GM10248 (cell line): ENCODE measurements at regions of chr1 and their contacts with region 1.

Region 1: GRCh38 chr1:151024540-151025146 is 11.7 kb upstream of the BNIPL start:
- DNase-seq: peak; percentile 81
- CTCF ChIP-seq: peak; percentile 69

Region 2: DNA sequence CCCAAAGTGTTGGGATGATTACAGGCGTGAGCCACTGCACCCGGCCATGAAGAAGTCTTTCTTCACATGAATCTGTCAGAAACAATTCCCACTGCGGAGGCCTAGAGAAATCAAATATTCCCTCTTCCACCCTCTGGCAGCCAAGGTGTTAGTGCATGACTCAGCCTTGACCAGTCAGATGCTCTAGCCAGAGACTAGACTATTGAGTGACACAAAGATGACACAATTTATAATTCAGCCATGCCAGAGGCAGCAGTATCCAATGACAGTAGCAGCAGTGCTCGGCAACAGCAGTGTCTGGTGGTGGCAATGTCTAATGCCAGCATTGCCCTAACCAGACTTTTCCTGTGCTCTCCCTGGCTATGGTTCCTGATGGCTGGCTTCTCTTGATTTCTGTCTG is 129.0 kb before region 1 on chr1:
- CTCF ChIA-PET with region 1: no interaction called
- POLR2A ChIA-PET with region 1: no interaction called
- DNase-seq: no peak
- CTCF ChIP-seq: no peak

Region 3: DNA sequence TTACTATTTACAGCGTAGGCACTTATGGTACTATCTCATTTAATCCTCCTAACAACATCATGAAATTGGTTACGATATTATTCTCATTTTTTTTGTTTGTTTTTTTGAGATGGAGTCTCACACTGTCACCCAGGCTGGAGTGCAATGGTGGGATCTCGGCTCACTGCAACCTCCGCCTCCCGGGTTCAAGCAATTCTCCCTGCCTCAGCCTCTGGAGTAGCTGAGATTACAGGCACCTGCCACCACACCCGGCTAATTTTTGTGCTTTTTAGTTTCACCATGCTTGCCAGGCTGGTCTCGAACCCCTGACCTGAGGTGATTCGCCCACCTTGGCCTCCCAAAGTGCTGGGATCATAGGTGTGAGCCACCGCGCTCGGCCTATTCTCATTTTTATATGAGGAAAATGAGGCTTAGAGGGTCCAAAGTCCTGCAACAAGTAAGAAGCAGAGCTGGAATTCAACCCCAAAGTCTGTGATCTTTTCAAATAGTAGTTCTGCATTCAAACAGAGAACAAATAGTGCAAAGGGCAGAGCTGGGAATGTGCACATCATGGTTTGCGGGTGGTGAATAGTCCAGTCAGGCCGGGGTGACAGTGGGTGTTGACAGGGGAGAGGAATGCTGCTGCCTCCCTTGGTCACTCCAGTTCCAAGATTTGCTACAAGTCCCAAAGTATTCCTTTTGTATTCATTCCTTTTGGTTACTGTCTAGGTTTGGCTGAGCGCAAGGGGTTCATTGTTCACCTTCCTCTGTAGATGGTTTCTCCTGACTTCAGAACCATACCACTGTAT is 11.8 kb before region 1 on chr1:
- CTCF ChIA-PET with region 1: interaction called, 12 read pairs
- POLR2A ChIA-PET with region 1: no interaction called
- DNase-seq: no peak
- CTCF ChIP-seq: no peak

Region 4: DNA sequence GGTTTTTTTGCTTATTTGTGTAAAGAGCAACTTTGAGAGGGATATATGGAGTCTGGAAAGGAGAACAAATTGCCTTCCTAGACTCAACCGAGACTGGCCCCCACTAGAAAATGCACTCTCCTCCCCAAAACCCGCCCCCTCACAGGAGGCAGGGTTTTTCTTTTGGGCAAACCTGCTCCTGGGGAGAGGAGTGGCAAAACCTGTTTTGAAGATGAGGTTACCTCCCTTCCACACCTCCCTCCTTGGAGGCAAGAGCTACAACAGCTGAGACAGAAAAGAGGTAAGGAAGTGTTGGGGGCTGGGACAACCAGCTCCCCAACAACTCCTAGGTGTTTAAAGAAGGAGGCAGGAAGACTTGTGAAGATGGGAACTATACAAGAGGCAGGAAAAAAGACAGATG is 11.7 kb after region 1 on chr1 and contains the start of gene BNIPL:
- CTCF ChIA-PET with region 1: interaction called, 11 read pairs
- POLR2A ChIA-PET with region 1: interaction called, 3 read pairs
- DNase-seq: no peak
- CTCF ChIP-seq: no peak

Region 5: DNA sequence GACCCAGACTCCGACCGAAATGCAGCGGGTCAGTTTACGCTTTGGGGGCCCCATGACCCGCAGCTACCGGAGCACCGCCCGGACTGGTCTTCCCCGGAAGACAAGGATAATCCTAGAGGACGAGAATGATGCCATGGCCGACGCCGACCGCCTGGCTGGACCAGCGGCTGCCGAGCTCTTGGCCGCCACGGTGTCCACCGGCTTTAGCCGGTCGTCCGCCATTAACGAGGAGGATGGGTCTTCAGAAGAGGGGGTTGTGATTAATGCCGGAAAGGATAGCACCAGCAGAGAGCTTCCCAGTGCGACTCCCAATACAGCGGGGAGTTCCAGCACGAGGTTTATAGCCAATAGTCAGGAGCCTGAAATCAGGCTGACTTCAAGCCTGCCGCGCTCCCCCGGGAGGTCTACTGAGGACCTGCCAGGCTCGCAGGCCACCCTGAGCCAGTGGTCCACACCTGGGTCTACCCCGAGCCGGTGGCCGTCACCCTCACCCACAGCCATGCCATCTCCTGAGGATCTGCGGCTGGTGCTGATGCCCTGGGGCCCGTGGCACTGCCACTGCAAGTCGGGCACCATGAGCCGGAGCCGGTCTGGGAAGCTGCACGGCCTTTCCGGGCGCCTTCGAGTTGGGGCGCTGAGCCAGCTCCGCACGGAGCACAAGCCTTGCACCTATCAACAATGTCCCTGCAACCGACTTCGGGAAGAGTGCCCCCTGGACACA is 23.4 kb after region 1 on chr1:
- CTCF ChIA-PET with region 1: interaction called, 10 read pairs
- POLR2A ChIA-PET with region 1: no interaction called
- DNase-seq: peak; percentile 78
- CTCF ChIP-seq: peak; percentile 49

Region 6: GRCh38 chr1:151156515-151156819 is 131.8 kb after region 1 on chr1 and contains the start of gene TNFAIP8L2:
- CTCF ChIA-PET with region 1: interaction called, 11 read pairs
- POLR2A ChIA-PET with region 1: no interaction called
- DNase-seq: peak; percentile 73
- CTCF ChIP-seq: no peak